ENCODE measurements at regions of chr14 and their contacts with region 1.

Region 1: DNA sequence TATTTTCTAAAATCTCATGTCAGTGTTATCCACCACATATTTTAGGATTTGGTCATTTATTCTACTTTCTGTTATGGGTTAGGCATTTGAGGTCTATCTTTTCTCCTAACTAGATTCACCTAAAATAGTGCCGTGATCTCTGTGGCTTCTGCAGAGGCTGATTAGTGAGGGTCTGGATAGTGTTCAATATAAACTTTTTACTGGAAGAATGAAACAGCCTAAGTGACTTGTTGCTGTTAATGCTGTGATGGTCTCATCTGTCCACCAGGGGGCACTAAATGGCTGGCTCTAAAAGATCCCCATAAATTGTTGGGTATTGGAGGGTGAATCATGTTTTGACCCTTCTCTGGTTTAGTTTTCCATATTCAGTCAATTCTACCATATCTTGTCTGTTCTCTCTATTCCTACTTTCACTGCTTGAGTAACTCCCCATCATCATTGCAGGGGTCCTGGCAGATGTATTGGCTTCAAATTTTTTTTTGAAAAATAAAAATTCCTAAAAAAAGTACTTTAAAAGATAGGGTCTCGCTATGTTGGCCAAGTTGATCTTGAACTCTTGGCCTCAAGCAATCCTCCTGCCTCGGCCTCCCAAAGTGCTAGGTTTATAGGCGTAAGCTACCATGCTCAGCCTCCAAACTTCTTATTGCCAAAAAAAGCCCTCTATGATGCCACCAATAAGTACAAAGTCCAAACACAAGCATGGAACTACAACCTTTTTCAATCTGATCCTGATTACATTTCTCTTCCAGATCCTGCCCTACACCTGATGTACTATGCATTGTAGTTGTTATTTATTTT is 6.9 kb downstream of the PABPN1 start:
- DNase-seq: peak; percentile 60
- ATAC-seq: peak; percentile 81
- H3K4me3 ChIP-seq: no peak overlapping the region
- H3K27ac ChIP-seq: no peak overlapping the region
- H3K4me1 ChIP-seq: peaks cover 0 to 2% of the 10 kb centered on the region in 2 experiments; a peak in 3 of 4 replicates
- H3K27me3 ChIP-seq: no peaks in the 10 kb centered on the region
- CTCF ChIP-seq: peak; percentile 83 to 94 (median 86)
- POLR2A ChIP-seq: no peak
- RAD21 ChIP-seq: peak; percentile 80

Region 2: DNA sequence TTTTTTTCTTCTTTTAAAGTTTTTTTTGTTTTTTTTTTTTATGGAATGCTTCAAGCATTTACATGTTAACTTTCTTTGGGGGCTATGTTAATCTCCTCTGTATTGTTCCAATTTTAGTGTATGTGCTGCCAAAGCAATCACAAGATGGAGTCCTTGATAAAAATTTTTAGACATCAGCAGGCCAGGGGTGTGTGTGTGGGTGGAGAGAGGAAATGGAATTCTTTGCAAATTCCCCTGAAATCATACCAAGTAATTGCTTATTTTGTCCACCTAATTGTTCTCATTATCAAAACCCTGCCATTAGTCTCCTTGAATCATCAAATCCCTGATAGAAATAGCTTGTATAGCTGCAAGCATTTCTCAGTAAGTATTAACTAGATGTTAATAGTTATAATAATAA is 68.7 kb before region 1 on chr14:
- CTCF ChIA-PET with region 1: no interaction called
- POLR2A ChIA-PET with region 1: no interaction called
- RAD21 ChIA-PET with region 1: no interaction called
- intact Hi-C with region 1: loop called (anchors 2 kb)
- DNase-seq: no peak
- ATAC-seq: no peak
- H3K4me3 ChIP-seq: no peak overlapping the region
- H3K27ac ChIP-seq: no peak overlapping the region
- H3K4me1 ChIP-seq: no peaks in the 10 kb centered on the region
- H3K27me3 ChIP-seq: no peaks in the 10 kb centered on the region; the same call in none of the 2 replicates
- CTCF ChIP-seq: no peak
- POLR2A ChIP-seq: no peak
- RAD21 ChIP-seq: no peak

Region 3: GRCh38 chr14:23362200-23362599 is 34.1 kb after region 1 on chr14:
- CTCF ChIA-PET with region 1: interaction called, 14 read pairs
- POLR2A ChIA-PET with region 1: no interaction called
- RAD21 ChIA-PET with region 1: interaction called in 1 of 2 experiments, 3 read pairs
- intact Hi-C with region 1: no loop called
- DNase-seq: no peak
- ATAC-seq: no peak
- H3K4me3 ChIP-seq: no peak overlapping the region
- H3K27ac ChIP-seq: no peak overlapping the region
- H3K4me1 ChIP-seq: no peaks in the 10 kb centered on the region
- H3K27me3 ChIP-seq: 0 out of 2 replicates have a peak, but pooled peaks cover 3% of the 10 kb centered on the region
- CTCF ChIP-seq: peak; percentile 10 to 18 (median 17); a peak in 3 of 6 replicates
- POLR2A ChIP-seq: no peak
- RAD21 ChIP-seq: peak; percentile 32; the same call in 1 of the 2 replicates

Region 4: DNA sequence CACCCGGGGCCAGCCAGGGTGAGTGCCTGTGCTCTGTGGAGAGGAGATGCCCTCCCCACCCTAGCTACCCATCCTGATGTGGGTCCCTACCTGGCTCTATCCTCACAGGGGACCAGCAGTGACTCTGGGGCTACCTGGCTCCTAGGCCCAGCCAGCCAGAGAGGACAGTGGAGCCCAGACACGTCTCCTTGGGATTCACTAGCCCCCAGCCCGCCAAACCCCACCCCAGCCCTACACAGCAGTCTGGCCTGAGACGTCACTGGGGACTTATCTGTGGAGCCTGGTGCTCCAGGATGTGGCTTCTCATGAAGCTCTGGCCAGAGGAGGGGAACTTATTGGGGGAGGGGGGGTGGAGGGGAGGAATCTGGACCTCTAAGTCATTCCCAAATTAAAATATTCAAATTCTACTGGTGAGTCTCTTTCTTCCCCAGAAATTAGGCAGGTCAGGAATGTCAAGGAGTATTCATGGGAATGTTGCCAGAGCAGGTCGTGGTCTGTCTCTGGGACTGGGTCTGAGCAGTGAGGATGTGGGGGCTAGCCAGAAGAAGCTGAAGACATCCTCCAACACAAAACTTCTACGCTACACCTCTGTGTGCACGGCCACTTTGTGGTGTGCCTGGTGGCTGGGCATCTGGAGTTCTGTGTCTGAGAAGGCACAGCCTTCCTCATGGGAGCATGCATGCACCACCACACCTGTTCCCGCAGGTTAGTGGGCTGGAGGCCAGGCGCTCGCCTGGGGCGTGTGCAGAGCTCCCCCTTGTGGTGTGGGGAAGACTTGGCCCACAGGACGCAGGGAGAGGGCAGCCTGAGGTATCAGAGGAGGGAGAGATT is 51.4 kb after region 1 on chr14:
- CTCF ChIA-PET with region 1: interaction called, 23 read pairs
- POLR2A ChIA-PET with region 1: interaction called, 3 read pairs
- RAD21 ChIA-PET with region 1: interaction called in 1 of 2 experiments, 8 read pairs
- intact Hi-C with region 1: loop called (anchors 1 kb)
- DNase-seq: peak; percentile 40
- ATAC-seq: peak; percentile 96
- H3K4me3 ChIP-seq: no peak overlapping the region
- H3K27ac ChIP-seq: no peak overlapping the region
- H3K4me1 ChIP-seq: no peaks in the 10 kb centered on the region
- H3K27me3 ChIP-seq: 0 out of 2 replicates have a peak, but pooled peaks cover 6% of the 10 kb centered on the region
- CTCF ChIP-seq: peak; percentile 90 to 99 (median 98)
- POLR2A ChIP-seq: no peak
- RAD21 ChIP-seq: peak; percentile 93

Region 5: GRCh38 chr14:23457587-23458445 is 129.7 kb after region 1 on chr14:
- CTCF ChIA-PET with region 1: interaction called, 6 read pairs
- POLR2A ChIA-PET with region 1: no interaction called
- RAD21 ChIA-PET with region 1: no interaction called
- intact Hi-C with region 1: loop called (anchors 5 kb)
- DNase-seq: no peak
- ATAC-seq: peak; percentile 73
- H3K4me3 ChIP-seq: peak overlapping the region in 1 of 2 experiments; percentile 22; a peak in 1 of 4 replicates
- H3K27ac ChIP-seq: no peak overlapping the region
- H3K4me1 ChIP-seq: peaks cover 2 to 11% of the 10 kb centered on the region in 2 experiments; a peak in 3 of 4 replicates
- H3K27me3 ChIP-seq: no peaks in the 10 kb centered on the region
- CTCF ChIP-seq: no peak
- POLR2A ChIP-seq: no peak
- RAD21 ChIP-seq: no peak

Region 6: GRCh38 chr14:23555882-23556699 is 227.9 kb after region 1 on chr14 and contains the start of gene THTPA:
- CTCF ChIA-PET with region 1: interaction called, 5 read pairs
- POLR2A ChIA-PET with region 1: no interaction called
- RAD21 ChIA-PET with region 1: no interaction called
- intact Hi-C with region 1: loop called (anchors 1 kb)
- DNase-seq: peak; percentile 81
- ATAC-seq: peak; percentile 80
- H3K4me3 ChIP-seq: peak within 1 kb of the TSS; percentile 81 to 92
- H3K27ac ChIP-seq: peak within 1 kb of the TSS; percentile 91
- H3K4me1 ChIP-seq: peaks cover 5 to 27% of the 10 kb centered on the region in 2 experiments; a peak in 3 of 4 replicates
- H3K27me3 ChIP-seq: no peaks in the 10 kb centered on the region
- CTCF ChIP-seq: no peak
- POLR2A ChIP-seq: peak; percentile 55
- RAD21 ChIP-seq: no peak
- total RNA-seq, gene THTPA: 5.8 TPM

Measured in HCT116 (cell line).